ENCODE measurements at regions of chr11 and their contacts with region 1.

Region 1: GRCh38 chr11:123020968-123021367 is 39.3 kb upstream of the BSX start:
- DNase-seq: no peak
- ATAC-seq: peak; percentile 95
- H3K4me3 ChIP-seq: no peak overlapping the region
- H3K27ac ChIP-seq: no peak overlapping the region
- H3K4me1 ChIP-seq: peaks cover 5% of the 10 kb centered on the region; the same call in 1 of the 2 replicates
- H3K27me3 ChIP-seq: no peaks in the 10 kb centered on the region
- CTCF ChIP-seq: peak; percentile 68 to 78 (median 73)
- EP300 ChIP-seq: no peak
- POLR2A ChIP-seq: no peak
- RAD21 ChIP-seq: peak; percentile 81

Region 2: DNA sequence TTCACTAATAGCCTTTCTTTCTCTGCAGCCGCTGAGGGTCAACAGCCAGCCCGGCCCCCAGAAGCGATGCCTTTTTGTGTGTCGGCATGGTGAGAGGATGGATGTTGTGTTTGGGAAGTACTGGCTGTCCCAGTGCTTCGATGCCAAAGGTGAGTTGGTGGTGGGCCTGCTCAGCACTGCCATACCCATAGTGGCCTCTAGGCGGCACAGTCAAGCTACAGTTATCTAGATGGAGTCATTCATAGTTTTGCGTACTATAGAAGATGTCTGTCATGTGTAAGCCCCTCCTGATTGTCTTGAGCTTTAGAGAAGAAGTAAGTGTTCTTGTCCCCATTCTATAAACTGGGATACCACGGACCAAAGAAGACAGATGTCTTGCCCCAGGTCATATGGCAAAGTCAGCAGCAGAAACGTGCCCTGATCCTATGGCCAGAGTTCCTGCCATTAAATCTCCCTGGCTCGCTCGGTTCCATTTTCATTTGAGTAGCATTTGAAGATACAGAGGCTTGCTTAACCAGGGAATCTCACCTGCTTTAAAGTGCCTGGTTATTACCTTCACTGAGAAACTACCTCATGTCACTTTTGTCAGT is 224.7 kb before region 1 on chr11:
- CTCF ChIA-PET with region 1: interaction called, 25 read pairs
- POLR2A ChIA-PET with region 1: no interaction called
- RAD21 ChIA-PET with region 1: interaction called, 10 read pairs
- SMC1A ChIA-PET with region 1: interaction called, 35 read pairs
- in situ Hi-C with region 1: loop called (anchors 5 kb)
- intact Hi-C with region 1: loop called (anchors 2 kb)
- DNase-seq: no peak
- ATAC-seq: peak; percentile 98
- H3K4me3 ChIP-seq: no peak overlapping the region
- H3K27ac ChIP-seq: no peak overlapping the region
- H3K4me1 ChIP-seq: no peaks in the 10 kb centered on the region
- H3K27me3 ChIP-seq: no peaks in the 10 kb centered on the region
- CTCF ChIP-seq: peak; percentile 92 to 96 (median 93)
- EP300 ChIP-seq: no peak
- POLR2A ChIP-seq: no peak
- RAD21 ChIP-seq: peak; percentile 92

Region 3: DNA sequence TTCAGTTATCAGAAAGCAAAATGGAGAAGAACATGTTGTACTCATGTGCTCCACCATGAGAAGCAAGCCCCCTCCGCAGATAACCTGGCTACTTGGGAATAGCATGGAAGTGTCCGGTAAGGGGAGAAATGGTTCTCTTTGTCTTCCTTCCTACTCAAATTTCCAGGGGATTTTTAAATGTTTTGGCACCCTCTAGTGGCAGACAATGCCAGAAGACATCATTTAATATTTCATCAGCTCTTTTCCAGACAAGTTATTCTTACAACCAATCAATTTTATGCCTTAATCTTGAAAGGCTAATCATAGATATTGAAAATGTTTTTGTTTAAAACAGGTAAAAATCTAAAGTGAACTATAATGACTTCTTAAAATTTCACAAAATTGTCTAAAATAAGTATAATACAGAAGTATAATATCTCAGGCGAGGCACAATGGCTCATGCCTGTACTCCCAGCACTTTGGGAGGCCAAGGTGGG is 167.0 kb before region 1 on chr11:
- CTCF ChIA-PET with region 1: interaction called, 869 read pairs
- POLR2A ChIA-PET with region 1: interaction called, 4 read pairs
- RAD21 ChIA-PET with region 1: interaction called, 138 read pairs
- SMC1A ChIA-PET with region 1: interaction called, 81 read pairs
- in situ Hi-C with region 1: no loop called
- intact Hi-C with region 1: no loop called
- DNase-seq: no peak
- ATAC-seq: no peak
- H3K4me3 ChIP-seq: no peak overlapping the region
- H3K27ac ChIP-seq: no peak overlapping the region
- H3K4me1 ChIP-seq: peaks cover 24% of the 10 kb centered on the region
- H3K27me3 ChIP-seq: no peaks in the 10 kb centered on the region
- CTCF ChIP-seq: peak; percentile 53 to 78 (median 73)
- EP300 ChIP-seq: no peak
- POLR2A ChIP-seq: no peak
- RAD21 ChIP-seq: peak; percentile 87

Region 4: DNA sequence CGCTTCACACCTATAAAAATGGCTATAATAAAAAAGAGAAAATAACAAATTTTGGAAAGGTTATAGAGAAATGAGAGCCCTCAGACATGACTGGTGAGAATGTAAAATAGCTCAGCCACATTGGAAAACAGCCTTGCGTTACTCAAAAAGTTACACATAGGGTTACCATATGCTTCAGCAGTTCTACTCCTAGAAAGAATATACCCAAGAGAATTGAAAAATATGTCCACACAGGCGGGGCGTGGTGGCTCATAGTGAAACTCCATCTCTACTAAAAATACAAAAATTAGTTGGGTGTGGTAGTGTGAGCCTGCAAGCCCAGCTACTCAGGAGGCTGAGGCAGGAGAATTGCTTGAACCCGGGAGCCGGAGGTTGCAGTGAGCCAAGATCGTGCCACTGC is 146.0 kb before region 1 on chr11:
- CTCF ChIA-PET with region 1: interaction called, 869 read pairs
- POLR2A ChIA-PET with region 1: interaction called, 5 read pairs
- RAD21 ChIA-PET with region 1: interaction called, 11 read pairs
- SMC1A ChIA-PET with region 1: interaction called, 74 read pairs
- in situ Hi-C with region 1: no loop called
- intact Hi-C with region 1: no loop called
- DNase-seq: peak; percentile 52
- ATAC-seq: peak; percentile 79
- H3K4me3 ChIP-seq: 0 out of 2 replicates have a peak overlapping the region, but pooled peaks have one; percentile 25
- H3K27ac ChIP-seq: no peak overlapping the region
- H3K4me1 ChIP-seq: peaks cover 3% of the 10 kb centered on the region; the same call in 1 of the 2 replicates
- H3K27me3 ChIP-seq: no peaks in the 10 kb centered on the region
- CTCF ChIP-seq: no peak
- EP300 ChIP-seq: no peak
- POLR2A ChIP-seq: no peak
- RAD21 ChIP-seq: no peak

Region 5: DNA sequence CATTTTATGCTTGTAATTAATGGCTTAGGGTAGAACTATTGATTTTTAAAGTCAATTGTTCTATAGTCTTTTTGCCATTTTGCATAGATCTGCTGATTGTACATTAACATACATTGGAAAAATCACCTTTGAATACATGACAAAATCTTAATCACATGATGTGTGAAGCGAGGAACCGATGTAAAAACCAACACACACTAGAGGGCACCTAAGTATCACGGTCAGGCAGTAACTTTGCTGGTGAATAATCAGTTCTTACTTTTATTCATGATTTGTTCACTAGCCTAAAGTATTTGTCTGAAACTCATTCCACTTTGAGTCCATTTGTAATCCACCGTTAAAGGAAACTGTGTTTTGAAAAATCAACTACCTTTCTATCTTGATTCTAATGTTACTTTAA is 110.2 kb before region 1 on chr11:
- CTCF ChIA-PET with region 1: interaction called, 16 read pairs
- POLR2A ChIA-PET with region 1: no interaction called
- RAD21 ChIA-PET with region 1: interaction called, 6 read pairs
- SMC1A ChIA-PET with region 1: interaction called, 11 read pairs
- in situ Hi-C with region 1: no loop called
- intact Hi-C with region 1: loop called (anchors 1 kb)
- DNase-seq: no peak
- ATAC-seq: peak; percentile 70
- H3K4me3 ChIP-seq: no peak overlapping the region
- H3K27ac ChIP-seq: no peak overlapping the region
- H3K4me1 ChIP-seq: no peaks in the 10 kb centered on the region
- H3K27me3 ChIP-seq: no peaks in the 10 kb centered on the region
- CTCF ChIP-seq: peak; percentile 8 to 52 (median 14); a peak in 3 of 6 replicates
- EP300 ChIP-seq: no peak
- POLR2A ChIP-seq: no peak
- RAD21 ChIP-seq: peak; percentile 55

Region 6: GRCh38 chr11:123033895-123034294 is 12.9 kb after region 1 on chr11:
- CTCF ChIA-PET with region 1: interaction called, 11 read pairs
- POLR2A ChIA-PET with region 1: no interaction called
- RAD21 ChIA-PET with region 1: interaction called, 6 read pairs
- SMC1A ChIA-PET with region 1: interaction called, 6 read pairs
- in situ Hi-C with region 1: no loop called
- intact Hi-C with region 1: no loop called
- DNase-seq: no peak
- ATAC-seq: peak; percentile 49; the same call in 1 of the 3 replicates
- H3K4me3 ChIP-seq: no peak overlapping the region
- H3K27ac ChIP-seq: no peak overlapping the region
- H3K4me1 ChIP-seq: no peaks in the 10 kb centered on the region
- H3K27me3 ChIP-seq: no peaks in the 10 kb centered on the region
- CTCF ChIP-seq: peak in 1 of 3 experiments; percentile 16; a peak in 1 of 6 replicates
- EP300 ChIP-seq: no peak
- POLR2A ChIP-seq: no peak
- RAD21 ChIP-seq: no peak

Measured in GM12878 (cell line).